ENCODE measurements at regions of chr12 and their contacts with region 1.

Region 1: DNA sequence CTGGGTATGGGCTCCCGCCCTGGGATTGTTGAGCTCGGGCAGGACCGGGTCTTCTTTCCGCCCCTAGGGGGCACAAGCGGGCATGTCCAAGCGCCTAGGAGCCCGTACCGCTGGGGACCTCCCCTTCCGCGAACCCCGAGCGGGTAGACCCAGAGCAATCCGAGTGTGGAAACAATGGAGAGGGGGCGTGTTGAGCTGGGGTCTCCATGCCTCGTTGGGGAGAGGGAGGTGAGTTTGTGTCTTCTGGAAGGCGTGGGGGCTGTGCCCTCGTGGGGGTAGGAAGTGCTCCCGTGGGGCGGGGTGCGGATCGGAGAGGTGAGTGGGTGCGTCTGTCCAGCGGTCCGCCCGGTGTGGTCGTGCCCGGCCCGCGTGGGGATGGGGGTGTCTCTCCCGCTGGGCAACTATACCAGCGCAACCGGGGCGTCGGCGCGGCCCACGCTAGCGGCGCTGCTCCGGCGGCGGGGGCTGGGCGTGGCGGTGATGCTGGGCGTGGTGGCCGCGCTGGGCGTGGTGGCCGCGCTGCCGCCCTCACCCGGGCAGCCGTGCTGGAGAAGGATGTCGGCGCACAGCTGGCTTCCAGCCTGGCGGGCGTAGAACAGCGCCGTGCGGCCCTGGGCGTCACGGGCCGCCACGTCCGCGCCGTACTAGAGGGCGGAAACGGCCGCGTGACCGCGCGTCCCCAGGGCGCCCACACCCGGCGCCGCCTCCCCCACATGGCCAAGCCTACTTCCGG is 12.2 kb downstream of the AGAP2 start:
- DNase-seq: peak; percentile 47
- H3K4me3 ChIP-seq: peak overlapping the region; percentile 92
- H3K27ac ChIP-seq: peak overlapping the region; percentile 52
- H3K27me3 ChIP-seq: peaks cover 12% of the 10 kb centered on the region
- CTCF ChIP-seq: peak; percentile 87

Region 2: DNA sequence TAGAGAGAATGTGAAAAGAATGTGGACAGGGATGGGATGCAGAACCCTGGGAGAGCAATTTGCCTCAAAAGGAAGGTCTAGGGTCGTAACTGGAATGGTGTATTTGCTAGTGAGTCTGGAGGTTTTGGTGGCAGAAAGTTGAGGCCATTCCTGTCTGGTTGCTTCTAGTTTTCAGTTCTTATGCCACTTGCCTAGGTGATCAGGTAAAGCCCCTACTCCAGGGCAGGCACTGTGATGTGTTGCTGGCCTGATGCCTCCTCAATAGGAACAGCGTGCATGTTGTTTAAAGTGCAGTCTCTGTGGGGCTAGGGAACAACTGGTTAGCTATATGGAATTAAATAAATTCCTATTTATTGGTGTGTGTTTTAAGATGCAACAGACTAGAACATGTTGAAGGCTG is 26.0 kb before region 1 on chr12:
- CTCF ChIA-PET with region 1: interaction called, 8 read pairs
- POLR2A ChIA-PET with region 1: interaction called, 13 read pairs
- DNase-seq: no peak
- H3K4me3 ChIP-seq: no peak overlapping the region
- H3K27ac ChIP-seq: no peak overlapping the region
- H3K27me3 ChIP-seq: no peaks in the 10 kb centered on the region
- CTCF ChIP-seq: no peak

Region 3: DNA sequence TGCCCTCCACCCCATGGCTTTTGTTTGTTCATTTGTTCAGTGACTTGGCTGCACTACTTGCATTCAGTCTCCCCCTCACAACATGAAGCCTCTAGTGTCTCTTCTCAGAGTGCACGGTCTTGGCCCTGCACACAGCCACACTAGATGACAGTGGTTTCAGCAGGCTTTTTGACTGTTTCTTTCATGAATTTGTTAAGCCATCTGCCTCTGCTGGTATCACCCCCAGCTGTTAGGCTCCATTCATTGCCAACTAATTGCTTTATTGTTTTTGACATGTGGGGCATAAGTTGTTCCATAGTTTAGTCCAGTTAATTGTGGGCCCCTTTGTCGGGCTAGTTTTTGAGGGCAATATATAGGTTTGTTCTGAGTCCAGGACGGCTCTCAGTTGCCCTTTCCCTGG is 13.6 kb before region 1 on chr12:
- CTCF ChIA-PET with region 1: interaction called, 15 read pairs
- POLR2A ChIA-PET with region 1: no interaction called
- DNase-seq: no peak
- H3K4me3 ChIP-seq: no peak overlapping the region
- H3K27ac ChIP-seq: no peak overlapping the region
- H3K27me3 ChIP-seq: no peaks in the 10 kb centered on the region
- CTCF ChIP-seq: no peak

Region 4: DNA sequence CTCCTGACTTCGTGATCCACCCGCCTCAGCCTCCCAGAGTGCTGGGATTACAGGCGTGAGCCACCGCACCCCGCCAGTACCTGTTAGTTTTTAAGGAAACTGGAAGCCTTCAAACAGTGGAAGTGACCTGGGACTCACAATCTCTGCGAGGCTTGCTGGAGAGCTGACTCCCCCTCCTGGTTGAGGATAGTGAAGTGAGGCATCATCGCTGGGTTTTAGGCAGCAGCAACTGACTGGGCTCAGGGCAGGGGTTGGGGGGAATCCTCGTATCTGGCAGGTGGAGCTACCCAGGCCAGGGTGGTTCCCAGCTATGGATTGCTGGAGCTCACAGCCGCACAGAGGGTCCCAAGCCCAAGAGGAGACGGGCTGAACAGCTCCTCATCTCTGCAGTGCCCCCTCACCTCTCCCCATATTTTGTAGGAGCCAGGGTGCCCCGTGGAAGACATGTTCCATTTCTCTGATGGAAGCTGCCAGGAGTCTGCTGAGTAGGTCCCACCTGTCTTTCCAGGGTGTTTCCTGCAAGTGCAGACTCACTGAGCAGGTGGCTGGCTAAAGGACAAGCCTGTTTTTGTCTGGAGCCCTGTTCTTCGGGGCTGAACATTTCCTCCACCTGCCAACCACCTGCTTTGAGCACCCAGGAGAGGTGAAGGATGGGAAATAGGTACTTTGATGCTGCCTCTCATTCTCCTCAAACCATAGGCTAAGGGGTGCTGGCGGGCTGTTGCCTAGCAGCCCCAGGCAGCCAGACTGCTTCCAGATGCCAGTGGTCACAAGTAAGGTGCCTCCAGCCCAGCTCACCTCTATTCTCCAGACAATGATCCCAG is 89.1 kb after region 1 on chr12:
- CTCF ChIA-PET with region 1: no interaction called
- POLR2A ChIA-PET with region 1: no interaction called
- DNase-seq: no peak
- H3K4me3 ChIP-seq: no peak overlapping the region
- H3K27ac ChIP-seq: no peak overlapping the region
- H3K27me3 ChIP-seq: no peaks in the 10 kb centered on the region
- CTCF ChIP-seq: peak; percentile 21; the same call in 1 of the 2 replicates